Ovary (tissue), 10 donors: ENCODE measurements at regions of chr20 and their contacts with region 1.

Region 1: DNA sequence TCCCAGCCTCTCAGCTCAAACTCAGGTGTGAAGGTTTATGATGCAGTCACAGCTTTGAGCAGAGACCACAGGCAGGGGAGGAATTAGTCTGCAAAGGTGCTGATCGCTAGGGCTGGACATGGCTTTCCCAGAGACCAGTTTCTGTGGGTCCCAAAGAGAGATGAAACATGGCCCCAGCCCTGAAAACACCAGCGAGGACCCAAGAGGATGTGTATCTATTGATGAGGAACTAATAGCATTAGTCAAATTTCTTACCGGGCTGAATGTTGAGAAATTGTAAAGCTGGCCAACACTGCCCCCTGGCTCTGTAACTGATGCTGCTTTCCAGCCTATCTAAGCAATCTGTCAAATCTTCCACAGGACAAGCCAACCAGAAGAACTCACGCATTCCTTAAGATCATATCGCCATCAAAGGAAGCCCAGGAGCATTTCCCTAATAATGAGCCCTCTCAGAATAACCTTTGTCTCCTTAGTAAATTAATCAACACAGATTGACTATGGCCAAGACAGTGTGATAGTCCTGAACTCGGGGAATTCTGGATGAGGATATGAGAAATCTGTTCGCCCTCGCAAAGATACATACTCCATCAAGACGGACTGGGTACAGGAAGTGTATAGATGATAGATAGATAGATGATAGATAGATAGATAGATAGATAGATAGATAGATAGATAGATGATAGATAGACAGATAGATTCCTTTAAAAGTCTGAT is 7.8 kb upstream of the ACSS1 start:
- DNase-seq: peak; percentile 46 to 74 (median 63)
- H3K4me3 ChIP-seq: no peak overlapping the region
- H3K27ac ChIP-seq: no peak overlapping the region
- H3K4me1 ChIP-seq: no peaks in the 10 kb centered on the region
- H3K27me3 ChIP-seq: no peaks in the 10 kb centered on the region
- CTCF ChIP-seq: peak; percentile 53 to 88 (median 82)
- EP300 ChIP-seq: no peak
- POLR2A ChIP-seq: no peak

Region 2: DNA sequence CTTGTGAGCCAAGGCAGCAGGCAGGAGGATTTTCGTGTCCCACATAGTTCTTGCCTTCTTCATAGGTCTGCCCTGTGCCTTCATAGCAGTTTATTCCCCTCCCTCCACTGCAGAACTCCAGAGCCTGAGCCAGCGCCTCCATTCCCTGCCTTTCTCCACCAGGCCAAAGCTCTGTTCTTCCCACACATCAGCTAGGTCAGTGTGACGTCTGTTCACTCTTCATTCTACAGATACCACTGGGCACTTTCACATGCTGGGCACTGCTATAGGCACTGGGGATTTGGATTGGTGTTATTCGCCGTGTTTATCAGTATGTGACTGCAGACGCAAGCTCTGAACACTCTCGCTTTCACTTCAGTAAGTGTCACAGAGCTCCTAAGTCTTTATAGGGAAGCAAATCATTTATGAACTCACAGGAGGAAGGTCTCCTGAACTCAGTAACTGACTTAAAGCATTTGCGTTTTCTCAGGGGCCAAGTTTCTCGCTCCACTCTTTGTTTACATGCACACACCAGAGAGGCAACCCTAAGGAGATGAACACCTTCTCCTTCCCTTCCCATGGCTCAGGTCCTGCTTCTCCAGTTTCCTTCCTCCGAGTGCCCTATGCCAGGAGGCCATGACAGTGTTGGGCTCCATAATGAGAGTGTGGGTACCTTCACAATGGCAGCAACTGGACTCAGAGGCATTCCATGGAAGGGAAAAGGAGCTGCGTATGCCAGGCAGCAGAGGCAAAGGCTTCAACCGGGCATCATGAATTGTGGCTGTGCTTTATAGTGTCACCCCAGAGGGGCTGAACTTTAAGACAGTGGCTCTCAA is 66.9 kb before region 1 on chr20:
- intact Hi-C with region 1: loop called (anchors 1 to 2 kb)
- DNase-seq: peak in 1 of 5 donors; percentile 2
- H3K4me3 ChIP-seq: no peak overlapping the region
- H3K27ac ChIP-seq: no peak overlapping the region
- H3K4me1 ChIP-seq: peaks cover 8% of the 10 kb centered on the region
- H3K27me3 ChIP-seq: no peaks in the 10 kb centered on the region
- CTCF ChIP-seq: no peak
- EP300 ChIP-seq: no peak
- POLR2A ChIP-seq: no peak

Region 3: DNA sequence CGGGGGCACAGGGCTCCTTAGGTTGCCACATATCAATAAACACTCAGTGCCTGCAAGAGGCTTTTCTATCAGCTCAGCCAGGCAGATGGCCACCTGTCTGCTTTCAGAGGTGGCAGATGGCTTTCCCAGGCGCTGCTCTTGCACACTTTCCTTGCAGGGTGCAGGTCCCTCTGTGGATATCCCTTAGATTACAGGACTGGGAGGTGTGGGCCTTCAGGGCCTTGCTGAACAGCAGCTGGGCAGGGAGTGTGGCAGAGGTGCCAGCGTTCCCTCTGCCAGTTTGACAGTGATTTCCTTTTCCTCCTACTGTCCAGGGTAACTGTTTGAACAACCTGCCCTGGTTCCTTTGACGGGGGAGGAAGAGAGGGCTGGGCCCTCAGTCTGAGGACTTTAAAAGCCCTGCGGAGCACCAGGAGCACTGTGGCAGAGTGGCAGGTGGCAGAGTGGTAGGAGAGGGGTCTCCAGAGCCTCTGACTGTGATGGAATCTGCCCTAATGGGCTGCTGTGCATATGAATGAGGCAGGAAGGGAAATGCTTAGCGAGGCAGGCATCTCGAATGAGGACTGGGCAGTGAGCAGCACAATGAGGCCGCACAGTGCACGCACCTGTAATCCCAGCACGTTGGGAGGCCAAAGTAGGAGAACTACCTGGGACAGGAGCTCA is 290.6 kb after region 1 on chr20:
- intact Hi-C with region 1: no loop called
- DNase-seq: no peak
- H3K4me3 ChIP-seq: no peak overlapping the region
- H3K27ac ChIP-seq: no peak overlapping the region
- H3K4me1 ChIP-seq: no peaks in the 10 kb centered on the region
- H3K27me3 ChIP-seq: no peaks in the 10 kb centered on the region
- CTCF ChIP-seq: no peak
- EP300 ChIP-seq: no peak
- POLR2A ChIP-seq: no peak

Region 4: GRCh38 chr20:25407311-25408169 is 341.8 kb after region 1 on chr20 and contains the start of gene GINS1:
- intact Hi-C with region 1: loop called in 1 of 4 experiments (anchors 10 kb)
- DNase-seq: peak; percentile 70 to 89 (median 83)
- H3K4me3 ChIP-seq: peak within 1 kb of the TSS; percentile 48
- H3K27ac ChIP-seq: no peak within 1 kb of the TSS
- H3K4me1 ChIP-seq: no peaks in the 10 kb centered on the region
- H3K27me3 ChIP-seq: no peaks in the 10 kb centered on the region
- CTCF ChIP-seq: no peak
- EP300 ChIP-seq: no peak
- POLR2A ChIP-seq: no peak
- total RNA-seq, gene GINS1: 0.69 to 2.7 (median 1.8) TPM in 6 of 7 donors, not detected in the other